ENCODE measurements at regions of chr10 and their contacts with region 1.

Region 1: DNA sequence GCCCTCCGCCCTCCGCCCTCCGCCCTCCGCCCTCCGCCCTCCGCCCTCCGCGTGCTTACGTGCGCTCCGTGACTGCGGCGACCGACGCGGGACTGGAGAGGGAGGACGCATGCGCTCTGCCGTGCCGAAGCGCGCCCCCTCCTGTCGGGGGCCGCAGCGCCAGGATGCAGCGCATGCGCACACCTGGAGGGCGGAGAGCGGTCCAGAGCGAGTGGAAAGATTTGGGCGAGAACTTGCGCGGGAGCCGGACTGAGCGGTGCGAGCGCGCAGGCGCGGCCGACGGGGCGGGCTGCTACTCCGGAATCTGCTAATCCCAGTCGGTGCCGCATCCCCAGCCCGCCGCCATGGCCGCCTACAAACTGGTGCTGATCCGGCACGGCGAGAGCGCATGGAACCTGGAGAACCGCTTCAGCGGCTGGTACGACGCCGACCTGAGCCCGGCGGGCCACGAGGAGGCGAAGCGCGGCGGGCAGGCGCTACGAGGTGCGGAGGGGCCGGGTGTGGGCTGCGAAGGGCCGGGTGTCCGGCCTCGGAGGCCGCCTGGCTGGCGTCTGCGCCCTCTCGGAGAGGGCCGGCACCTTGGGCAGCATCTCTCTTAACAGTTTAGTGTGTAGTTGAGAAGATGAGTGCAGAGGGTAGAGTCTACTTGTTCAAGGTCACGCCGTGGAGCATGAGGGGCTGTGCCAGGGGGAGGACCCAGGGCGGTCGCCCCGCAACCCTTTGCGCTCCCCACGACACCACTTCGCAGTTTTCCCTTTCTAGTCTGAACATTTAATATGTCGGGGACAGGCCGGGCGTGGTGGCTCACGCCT is at the start of gene PGAM1:
- DNase-seq: peak; percentile 100
- H3K4me3 ChIP-seq: peak within 1 kb of the TSS; percentile 61 to 99
- H3K27ac ChIP-seq: peak within 1 kb of the TSS; percentile 78 to 97
- H3K4me1 ChIP-seq: peaks cover 14 to 28% of the 10 kb centered on the region in 2 experiments; a peak in 3 of 4 replicates
- H3K27me3 ChIP-seq: no peaks in the 10 kb centered on the region
- CTCF ChIP-seq: peak; percentile 59
- EP300 ChIP-seq: no peak
- RAD21 ChIP-seq: no peak
- polyA plus RNA-seq, gene PGAM1: 398 and 419 TPM in 2 replicates

Region 2: DNA sequence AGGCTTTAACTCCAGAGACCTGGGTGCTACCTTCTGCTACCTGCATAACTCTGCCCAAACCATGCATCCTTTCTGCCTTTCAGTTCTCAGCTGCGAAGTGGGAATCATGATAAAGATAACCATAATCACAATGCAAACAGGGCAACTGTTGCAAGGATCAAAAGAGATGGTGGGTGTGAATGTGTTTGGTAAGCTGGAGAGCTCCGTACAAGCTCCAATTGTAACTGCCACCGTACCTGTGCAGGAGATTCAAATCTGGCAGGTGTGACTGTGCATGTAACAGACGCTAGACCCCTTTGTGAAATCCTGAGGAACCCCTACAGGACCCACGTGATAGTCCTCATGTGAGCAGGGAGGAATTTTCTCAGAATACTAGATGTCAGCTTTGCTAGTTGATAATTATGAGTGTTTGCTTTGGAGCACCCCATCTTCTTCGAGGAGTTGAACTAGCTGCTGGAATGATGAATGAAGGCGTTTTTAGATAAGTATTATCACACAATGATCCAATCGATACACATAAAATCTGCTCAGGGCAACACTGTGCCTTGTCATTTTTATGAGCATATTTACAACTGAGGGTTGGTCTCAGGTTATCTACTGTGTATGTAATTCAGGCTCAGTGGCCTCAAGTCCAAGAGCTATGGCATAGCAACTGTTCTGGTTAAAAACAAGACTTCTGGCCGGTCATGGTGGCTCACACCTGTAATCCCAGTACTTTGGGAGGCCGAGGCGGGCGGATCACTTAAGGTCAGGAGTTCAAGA is 76.2 kb before region 1 on chr10:
- CTCF ChIA-PET with region 1: no interaction called
- POLR2A ChIA-PET with region 1: no interaction called
- DNase-seq: no peak
- H3K4me3 ChIP-seq: no peak overlapping the region
- H3K27ac ChIP-seq: peak overlapping the region in 1 of 2 experiments; percentile 39; a peak in 1 of 4 replicates
- H3K4me1 ChIP-seq: peaks cover 0 to 6% of the 10 kb centered on the region in 2 experiments; a peak in 1 of 4 replicates
- H3K27me3 ChIP-seq: no peaks in the 10 kb centered on the region
- CTCF ChIP-seq: no peak
- EP300 ChIP-seq: no peak
- RAD21 ChIP-seq: no peak

Region 3: GRCh38 chr10:97388152-97388551 is 38.0 kb before region 1 on chr10:
- CTCF ChIA-PET with region 1: no interaction called
- POLR2A ChIA-PET with region 1: no interaction called
- DNase-seq: no peak
- H3K4me3 ChIP-seq: no peak overlapping the region
- H3K27ac ChIP-seq: no peak overlapping the region
- H3K4me1 ChIP-seq: no peaks in the 10 kb centered on the region
- H3K27me3 ChIP-seq: no peaks in the 10 kb centered on the region
- CTCF ChIP-seq: no peak
- EP300 ChIP-seq: no peak
- RAD21 ChIP-seq: no peak

Region 4: DNA sequence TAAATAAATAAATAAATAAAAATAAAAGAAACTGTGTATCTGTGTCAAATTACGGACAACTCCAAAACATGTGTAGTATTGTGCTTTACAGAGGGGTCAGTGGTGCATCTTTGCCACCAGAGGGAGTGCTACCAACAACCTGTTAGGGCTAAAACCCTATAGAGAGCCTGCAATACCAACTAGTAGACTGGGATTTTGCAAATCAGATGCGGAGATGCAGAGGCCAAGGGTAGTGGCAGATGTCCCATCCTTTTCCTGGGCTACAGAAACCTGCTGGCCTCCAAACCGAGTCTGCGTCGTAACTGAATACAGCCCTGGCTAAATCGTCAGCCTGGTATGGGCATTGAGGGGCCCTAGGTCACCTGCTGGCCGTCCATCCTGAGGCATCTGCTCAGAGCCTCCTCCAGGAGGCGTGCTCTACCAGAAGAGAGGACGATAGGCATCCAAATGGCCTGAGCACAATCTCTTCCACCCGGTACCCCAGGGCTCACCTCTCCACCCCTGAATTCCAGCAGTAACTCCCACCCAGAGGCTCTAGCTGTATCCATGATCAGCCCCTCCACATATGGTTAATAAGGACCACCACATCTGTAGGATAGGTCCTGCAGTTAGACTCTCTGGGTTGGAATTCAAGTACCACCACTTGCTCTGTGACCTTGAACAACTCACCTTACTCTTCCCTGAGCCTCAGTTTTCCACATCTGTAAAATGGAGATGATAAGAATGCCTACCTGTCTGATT is 18.8 kb before region 1 on chr10:
- CTCF ChIA-PET with region 1: interaction called, 35 read pairs
- POLR2A ChIA-PET with region 1: no interaction called
- DNase-seq: peak; percentile 79
- H3K4me3 ChIP-seq: peak overlapping the region; percentile 28 to 56; a peak in 3 of 4 replicates
- H3K27ac ChIP-seq: peak overlapping the region in 1 of 2 experiments; percentile 31; a peak in 1 of 4 replicates
- H3K4me1 ChIP-seq: peaks cover 0 to 4% of the 10 kb centered on the region in 2 experiments; a peak in 1 of 4 replicates
- H3K27me3 ChIP-seq: no peaks in the 10 kb centered on the region
- CTCF ChIP-seq: peak; percentile 96
- EP300 ChIP-seq: no peak
- RAD21 ChIP-seq: peak; percentile 59